RWPE1 (cell line): ENCODE measurements at regions of chr17 and their contacts with region 1.

Region 1: GRCh38 chr17:1055751-1056645 is 59.1 kb downstream of the TIMM22 start:
- DNase-seq: peak; percentile 54
- H3K27ac ChIP-seq: peak overlapping the region; percentile 58
- CTCF ChIP-seq: peak; percentile 71

Region 2: GRCh38 chr17:1002771-1003555 is 53.0 kb before region 1 on chr17:
- CTCF ChIA-PET with region 1: interaction called, 14 read pairs
- POLR2A ChIA-PET with region 1: no interaction called
- DNase-seq: no peak
- H3K27ac ChIP-seq: 0 out of 2 replicates have a peak overlapping the region, but pooled peaks have one; percentile 9
- CTCF ChIP-seq: no peak

Region 3: GRCh38 chr17:1074886-1075605 is 19.0 kb after region 1 on chr17:
- CTCF ChIA-PET with region 1: interaction called, 11 read pairs
- POLR2A ChIA-PET with region 1: no interaction called
- DNase-seq: no peak
- H3K27ac ChIP-seq: peak overlapping the region; percentile 23
- CTCF ChIP-seq: no peak

Region 4: DNA sequence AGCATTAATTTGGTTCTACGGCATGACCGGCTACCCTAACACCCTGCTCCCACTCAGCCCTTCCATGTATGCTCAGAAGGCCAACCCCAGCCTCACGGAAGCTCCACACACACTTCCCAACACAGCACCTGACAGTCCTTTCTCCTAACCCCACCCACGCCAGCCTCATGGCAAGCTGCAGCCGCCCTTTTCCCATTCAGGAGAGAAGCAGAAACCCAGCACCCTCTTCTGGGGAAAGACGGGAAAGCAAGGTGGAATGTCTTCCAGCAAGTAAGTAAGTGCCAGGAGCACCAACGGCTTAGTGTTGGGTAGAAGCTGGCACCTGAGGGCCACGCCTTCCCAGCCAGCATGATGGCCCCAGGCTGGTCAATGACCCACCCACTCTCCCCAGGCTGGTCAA is 91.7 kb after region 1 on chr17:
- CTCF ChIA-PET with region 1: interaction called, 30 read pairs
- POLR2A ChIA-PET with region 1: no interaction called
- DNase-seq: peak; percentile 64
- H3K27ac ChIP-seq: no peak overlapping the region
- CTCF ChIP-seq: peak; percentile 40

Region 5: DNA sequence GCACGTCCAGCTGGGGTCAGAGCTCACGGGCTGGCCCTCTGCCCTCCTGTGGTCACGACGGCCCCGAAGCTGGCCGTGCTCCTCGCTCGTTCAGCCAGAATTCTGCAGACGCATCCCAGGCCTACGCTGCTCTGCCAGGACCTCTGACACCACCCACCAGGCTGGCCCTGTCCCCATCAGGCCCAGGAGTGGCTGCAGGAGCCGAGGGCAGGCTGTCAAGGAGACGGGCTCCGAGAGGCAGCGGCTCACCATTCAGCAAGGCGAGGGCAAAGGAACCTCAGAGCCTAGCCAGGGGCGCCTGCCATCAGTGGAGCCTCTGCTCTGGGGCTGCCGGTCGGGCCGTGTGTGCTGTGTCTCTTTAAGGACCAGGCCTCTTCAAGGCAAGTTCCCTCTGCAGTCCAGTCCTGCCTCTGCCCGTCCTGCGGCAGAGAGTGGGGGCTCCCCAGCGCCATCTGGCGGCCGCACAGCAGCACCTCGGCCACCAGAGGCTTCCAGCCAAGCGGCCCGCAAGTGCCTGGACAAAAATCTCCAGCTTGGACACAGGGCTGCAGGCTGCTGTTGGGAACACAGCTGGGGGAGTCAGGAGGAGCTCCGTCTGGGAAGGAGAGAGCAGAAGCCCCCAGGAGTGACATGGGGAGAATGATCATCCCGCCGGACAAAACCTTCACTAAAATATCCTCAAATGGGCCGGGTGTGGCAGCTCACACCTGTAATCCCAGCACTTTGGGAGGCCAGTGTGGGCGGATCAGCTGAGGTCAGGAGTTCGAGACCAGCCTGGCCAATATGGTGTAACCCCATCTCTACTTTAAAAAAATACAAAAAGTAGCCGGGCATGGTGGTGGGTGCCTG is 131.1 kb after region 1 on chr17:
- CTCF ChIA-PET with region 1: interaction called, 20 read pairs
- POLR2A ChIA-PET with region 1: no interaction called
- DNase-seq: peak; percentile 78
- H3K27ac ChIP-seq: no peak overlapping the region
- CTCF ChIP-seq: peak; percentile 97

Region 6: GRCh38 chr17:1870592-1870991 is 814.6 kb after region 1 on chr17:
- CTCF ChIA-PET with region 1: no interaction called
- POLR2A ChIA-PET with region 1: no interaction called
- DNase-seq: no peak
- H3K27ac ChIP-seq: no peak overlapping the region
- CTCF ChIP-seq: no peak